ENCODE measurements at regions of chr11 and their contacts with region 1.

Region 1: DNA sequence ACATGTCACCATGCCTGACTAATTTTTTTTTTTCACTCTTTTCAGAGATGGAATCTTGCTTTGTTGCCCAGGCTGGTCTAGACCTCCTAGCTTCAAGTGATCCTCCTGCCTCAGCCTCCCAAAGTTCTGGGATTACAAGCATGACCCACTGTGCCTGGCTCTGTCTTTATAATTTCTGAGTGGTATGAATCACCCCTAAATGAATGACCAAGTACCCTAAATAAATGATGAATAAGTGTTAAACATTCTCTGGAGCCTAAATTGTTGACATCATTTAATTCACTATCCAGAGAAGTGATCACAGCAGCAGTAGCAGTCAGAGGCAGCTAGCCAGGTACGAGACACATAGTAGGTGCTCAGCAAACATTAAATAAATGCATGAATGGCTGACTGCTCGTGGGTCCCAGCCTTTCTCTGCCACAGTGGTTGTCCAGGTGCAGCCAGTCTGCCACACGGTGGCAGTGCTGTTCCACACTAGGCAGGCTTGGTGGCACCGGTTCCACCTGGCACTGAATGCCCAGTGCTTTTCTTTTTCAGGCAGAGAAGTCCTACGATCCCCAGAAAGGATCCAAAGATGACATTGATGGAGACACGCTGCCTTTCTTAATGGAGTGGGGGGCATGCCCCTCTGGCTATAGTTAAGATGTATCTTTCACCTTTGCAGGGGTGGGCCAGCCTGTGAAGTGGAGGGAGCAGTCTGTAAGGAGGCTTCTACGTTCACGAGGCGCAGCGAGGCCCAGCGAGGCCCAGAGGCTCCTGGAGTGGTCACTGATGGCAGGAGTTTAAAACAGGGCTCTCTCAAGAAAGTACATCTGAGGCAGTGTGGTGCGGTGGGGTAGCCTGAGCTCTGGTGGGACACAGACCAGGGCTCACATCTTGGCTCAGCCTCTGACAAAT is 8.7 kb upstream of the TTC12 start:
- DNase-seq: peak; percentile 51
- ATAC-seq: peak; percentile 99
- H3K4me3 ChIP-seq: no peak overlapping the region
- H3K27ac ChIP-seq: no peak overlapping the region
- H3K4me1 ChIP-seq: no peaks in the 10 kb centered on the region
- H3K27me3 ChIP-seq: peaks cover 3% of the 10 kb centered on the region; the same call in 1 of the 2 replicates
- CTCF ChIP-seq: peak; percentile 96
- POLR2A ChIP-seq: peak; percentile 51; the same call in 1 of the 2 replicates
- RAD21 ChIP-seq: peak; percentile 99

Region 2: DNA sequence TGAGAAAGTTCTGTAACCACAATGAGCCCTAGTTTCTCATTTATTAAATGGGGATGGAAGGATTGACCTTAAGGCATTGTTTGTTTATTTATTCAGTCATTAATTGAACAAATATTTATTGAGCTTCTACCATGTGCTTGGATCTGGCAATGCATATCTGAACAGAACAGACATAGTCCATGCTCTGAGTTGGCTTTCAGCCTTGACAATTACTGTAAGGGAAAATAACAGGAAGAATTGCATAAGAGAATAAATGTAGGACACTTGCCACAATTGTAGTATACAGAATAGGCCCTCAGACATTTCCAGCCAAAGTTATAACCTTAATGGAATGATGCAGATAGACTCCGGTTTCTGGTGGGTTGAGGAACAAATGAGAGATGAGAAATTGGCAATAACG is 151.8 kb before region 1 on chr11:
- CTCF ChIA-PET with region 1: no interaction called
- POLR2A ChIA-PET with region 1: no interaction called
- dilution Hi-C with region 1: no loop called
- in situ Hi-C with region 1: no loop called
- intact Hi-C with region 1: no loop called
- DNase-seq: no peak
- ATAC-seq: no peak
- H3K4me3 ChIP-seq: no peak overlapping the region
- H3K27ac ChIP-seq: no peak overlapping the region
- H3K4me1 ChIP-seq: no peaks in the 10 kb centered on the region
- H3K27me3 ChIP-seq: no peaks in the 10 kb centered on the region
- CTCF ChIP-seq: no peak
- POLR2A ChIP-seq: no peak
- RAD21 ChIP-seq: no peak

Region 3: DNA sequence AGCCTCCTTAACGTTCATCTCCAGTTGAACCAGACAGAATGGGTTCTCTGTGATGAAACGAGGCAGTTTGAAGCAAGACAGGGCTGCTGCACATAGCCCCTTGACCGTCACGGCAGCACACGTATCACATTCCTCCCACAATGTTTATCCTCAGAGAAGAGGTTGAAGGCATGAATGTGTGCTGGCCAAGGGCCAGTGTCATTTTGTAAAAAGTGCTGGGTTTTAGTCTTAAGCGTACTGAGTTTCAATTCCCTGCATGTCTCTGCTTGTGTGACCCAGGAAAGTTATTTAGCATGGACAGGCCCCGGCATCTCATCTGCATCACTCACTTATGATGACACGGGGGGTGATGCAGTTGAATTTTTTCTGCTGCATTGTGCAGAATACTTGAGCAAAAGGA is 40.3 kb after region 1 on chr11:
- CTCF ChIA-PET with region 1: no interaction called
- POLR2A ChIA-PET with region 1: no interaction called
- dilution Hi-C with region 1: no loop called
- in situ Hi-C with region 1: no loop called
- intact Hi-C with region 1: no loop called
- DNase-seq: peak; percentile 73
- ATAC-seq: peak; percentile 88
- H3K4me3 ChIP-seq: no peak overlapping the region
- H3K27ac ChIP-seq: peak overlapping the region; percentile 26; the same call in 1 of the 2 replicates
- H3K4me1 ChIP-seq: peaks cover 14% of the 10 kb centered on the region; the same call in 1 of the 2 replicates
- H3K27me3 ChIP-seq: no peaks in the 10 kb centered on the region
- CTCF ChIP-seq: 0 out of 2 replicates have a peak, but pooled peaks have one; percentile 11
- POLR2A ChIP-seq: no peak
- RAD21 ChIP-seq: no peak

Region 4: GRCh38 chr11:113494021-113494420 is 188.3 kb after region 1 on chr11:
- CTCF ChIA-PET with region 1: interaction called, 3 read pairs
- POLR2A ChIA-PET with region 1: no interaction called
- dilution Hi-C with region 1: no loop called
- in situ Hi-C with region 1: no loop called
- intact Hi-C with region 1: loop called (anchors 2 kb)
- DNase-seq: no peak
- ATAC-seq: no peak
- H3K4me3 ChIP-seq: no peak overlapping the region
- H3K27ac ChIP-seq: no peak overlapping the region
- H3K4me1 ChIP-seq: no peaks in the 10 kb centered on the region
- H3K27me3 ChIP-seq: no peaks in the 10 kb centered on the region; the same call in 1 of the 2 replicates
- CTCF ChIP-seq: no peak
- POLR2A ChIP-seq: no peak
- RAD21 ChIP-seq: no peak

Region 5: DNA sequence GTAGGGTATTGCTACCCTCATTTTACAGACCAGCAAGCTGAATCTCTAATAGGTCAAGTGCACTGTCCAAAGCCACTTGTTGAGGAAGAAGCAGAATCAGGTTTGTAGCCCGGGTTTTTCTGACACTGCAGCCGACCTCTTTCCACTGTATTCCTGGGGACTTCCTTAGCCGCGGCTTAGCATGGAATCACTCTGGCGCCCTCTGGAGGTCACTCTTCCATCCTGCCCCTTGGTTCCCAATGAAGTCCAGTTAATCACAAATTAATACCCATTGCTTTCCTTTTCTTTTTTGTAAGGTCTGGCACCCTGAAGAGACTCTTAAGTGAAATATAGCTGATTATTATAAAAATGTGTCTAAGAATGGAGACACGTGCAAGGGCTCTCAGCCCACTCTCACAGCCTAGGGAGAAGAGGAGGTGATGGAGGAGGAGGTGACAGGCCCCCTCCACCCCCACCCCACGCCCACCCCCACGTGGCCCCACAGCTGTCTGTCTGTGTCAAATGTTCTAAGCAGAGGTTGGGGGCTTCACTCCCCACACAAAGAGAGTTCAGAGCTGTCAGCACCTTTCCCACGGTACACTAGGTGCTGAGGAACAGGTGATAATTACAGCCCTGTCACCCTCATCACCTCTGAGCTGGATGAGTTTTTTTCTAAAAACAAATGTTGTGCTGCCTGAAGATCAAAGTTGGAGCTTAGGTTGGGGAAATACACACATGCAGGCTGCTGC is 227.2 kb after region 1 on chr11:
- CTCF ChIA-PET with region 1: no interaction called
- POLR2A ChIA-PET with region 1: no interaction called
- dilution Hi-C with region 1: no loop called
- in situ Hi-C with region 1: loop called (anchors 5 kb)
- intact Hi-C with region 1: loop called (anchors 1 kb)
- DNase-seq: peak; percentile 71
- ATAC-seq: peak; percentile 98
- H3K4me3 ChIP-seq: no peak overlapping the region
- H3K27ac ChIP-seq: no peak overlapping the region
- H3K4me1 ChIP-seq: no peaks in the 10 kb centered on the region
- H3K27me3 ChIP-seq: peaks cover 28% of the 10 kb centered on the region
- CTCF ChIP-seq: peak; percentile 86
- POLR2A ChIP-seq: no peak
- RAD21 ChIP-seq: peak; percentile 81

Region 6: DNA sequence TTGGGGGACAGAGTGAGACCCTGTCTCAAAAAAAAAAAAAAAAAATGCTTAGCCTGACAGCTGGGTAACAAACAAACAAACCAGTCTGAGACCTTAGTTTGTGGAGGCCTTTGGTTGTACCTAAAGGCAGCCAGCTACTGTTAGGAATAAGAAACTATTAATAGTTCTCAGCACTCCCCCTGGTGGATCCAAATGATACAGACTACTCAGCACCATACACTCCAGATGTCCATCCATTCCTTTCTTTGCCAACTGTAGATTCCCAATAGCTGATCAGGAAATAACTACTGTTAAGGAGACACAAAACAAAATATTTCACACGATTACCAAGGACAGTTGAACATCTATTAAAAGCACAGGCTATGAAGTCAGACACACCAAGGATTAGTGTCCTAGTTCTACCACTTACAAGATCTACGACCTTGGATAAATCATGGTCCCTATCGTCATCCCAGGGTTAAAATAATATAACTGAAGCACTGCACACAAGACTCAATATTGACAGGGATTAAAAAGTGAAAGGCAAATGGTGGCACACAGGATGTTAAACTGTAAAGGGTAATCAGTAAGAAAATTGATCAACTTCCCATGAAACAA is 491.1 kb after region 1 on chr11:
- CTCF ChIA-PET with region 1: interaction called, 3 read pairs
- POLR2A ChIA-PET with region 1: no interaction called
- dilution Hi-C with region 1: no loop called
- in situ Hi-C with region 1: no loop called
- intact Hi-C with region 1: loop called (anchors 1 kb)
- DNase-seq: peak; percentile 34
- ATAC-seq: peak; percentile 95
- H3K4me3 ChIP-seq: no peak overlapping the region
- H3K27ac ChIP-seq: no peak overlapping the region
- H3K4me1 ChIP-seq: no peaks in the 10 kb centered on the region
- H3K27me3 ChIP-seq: no peaks in the 10 kb centered on the region
- CTCF ChIP-seq: peak; percentile 50
- POLR2A ChIP-seq: no peak
- RAD21 ChIP-seq: no peak

Measured in IMR-90 (cell line).